RWPE1 (cell line): ENCODE measurements at regions of chr20 and their contacts with region 1.

Region 1: GRCh38 chr20:51888291-51888690 is 86.0 kb upstream of the SALL4 start:
- DNase-seq: no peak
- H3K27ac ChIP-seq: no peak overlapping the region
- CTCF ChIP-seq: no peak

Region 2: DNA sequence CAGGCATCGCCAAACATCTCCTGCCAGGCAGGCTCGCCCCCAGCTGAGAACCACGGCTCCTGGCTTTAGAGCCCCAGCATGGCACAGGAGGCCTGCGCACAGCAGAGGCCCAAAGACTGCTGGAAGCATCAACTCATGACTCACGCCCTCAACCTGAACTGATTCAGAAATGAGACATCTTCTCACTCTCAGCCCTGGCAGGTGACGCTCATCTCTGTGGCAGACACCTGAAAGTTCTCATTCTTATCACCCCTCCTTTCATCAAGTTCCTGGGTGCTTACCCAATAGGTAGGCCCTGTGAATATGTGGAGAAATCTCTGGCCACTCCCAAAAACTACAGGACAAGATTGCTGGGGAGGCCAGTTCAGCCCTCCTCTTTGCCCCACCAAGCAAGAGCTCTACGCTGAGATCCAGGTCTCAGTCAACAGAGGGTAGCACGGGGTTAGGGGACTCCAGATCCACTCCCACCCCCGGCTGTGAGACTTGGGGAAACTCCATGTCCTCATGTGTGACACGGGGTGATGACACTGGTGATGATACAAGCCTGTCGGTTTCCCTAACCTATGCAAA is 357.1 kb before region 1 on chr20:
- CTCF ChIA-PET with region 1: no interaction called
- POLR2A ChIA-PET with region 1: no interaction called
- DNase-seq: peak; percentile 97
- H3K27ac ChIP-seq: no peak overlapping the region
- CTCF ChIP-seq: no peak

Region 3: DNA sequence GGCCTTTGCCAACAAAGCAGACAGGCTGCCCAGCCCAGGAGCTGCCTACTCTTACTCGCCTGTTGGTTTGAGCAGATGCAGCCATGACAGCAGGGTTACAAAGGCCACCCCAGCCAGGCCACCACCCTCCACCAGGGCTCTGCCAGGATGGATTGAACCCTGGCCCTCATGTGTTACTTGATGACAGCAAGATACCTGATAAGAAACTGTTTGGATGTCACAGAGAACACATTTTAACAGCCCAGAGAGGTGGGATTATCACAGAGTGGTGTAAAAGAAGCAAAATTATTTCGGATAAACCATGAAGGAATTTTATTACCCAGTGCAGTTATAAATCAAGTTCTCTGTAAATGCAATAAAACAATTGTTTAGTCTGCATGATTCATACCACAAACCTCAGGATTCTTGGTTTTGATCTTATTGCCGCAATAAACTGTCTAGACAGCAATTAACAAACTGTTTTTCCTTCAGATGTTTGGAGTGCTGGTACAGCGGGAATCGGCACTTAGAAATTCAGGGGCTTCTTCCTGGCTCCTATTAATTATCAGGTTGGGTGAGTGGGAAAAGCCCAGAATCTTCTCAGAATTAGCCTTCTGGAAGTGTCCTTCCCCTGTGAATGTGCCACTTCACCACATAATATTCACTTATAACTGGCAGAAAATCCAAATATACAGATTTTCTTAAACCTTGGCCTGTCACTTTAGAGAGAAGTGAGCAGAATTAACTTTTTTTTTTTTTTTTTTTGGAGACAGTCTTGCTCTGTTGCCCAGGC is 28.0 kb before region 1 on chr20:
- CTCF ChIA-PET with region 1: no interaction called
- POLR2A ChIA-PET with region 1: interaction called, 19 read pairs
- DNase-seq: peak; percentile 39
- H3K27ac ChIP-seq: peak overlapping the region; percentile 52
- CTCF ChIP-seq: no peak